Mammary epithelial cell (primary cell): ENCODE measurements at regions of chr1 and their contacts with region 1.

Region 1: GRCh38 chr1:147242439-147243227 is at the start of gene CHD1L:
- DNase-seq: peak; percentile 94
- H3K4me3 ChIP-seq: peak within 1 kb of the TSS; percentile 88 to 94 (median 93)
- H3K27ac ChIP-seq: peak within 1 kb of the TSS; percentile 76
- H3K4me1 ChIP-seq: peaks cover 14% of the 10 kb centered on the region
- H3K27me3 ChIP-seq: no peaks in the 10 kb centered on the region
- CTCF ChIP-seq: peak; percentile 79 to 95
- total RNA-seq, gene CHD1L: 33.0 to 50.9 TPM

Region 2: DNA sequence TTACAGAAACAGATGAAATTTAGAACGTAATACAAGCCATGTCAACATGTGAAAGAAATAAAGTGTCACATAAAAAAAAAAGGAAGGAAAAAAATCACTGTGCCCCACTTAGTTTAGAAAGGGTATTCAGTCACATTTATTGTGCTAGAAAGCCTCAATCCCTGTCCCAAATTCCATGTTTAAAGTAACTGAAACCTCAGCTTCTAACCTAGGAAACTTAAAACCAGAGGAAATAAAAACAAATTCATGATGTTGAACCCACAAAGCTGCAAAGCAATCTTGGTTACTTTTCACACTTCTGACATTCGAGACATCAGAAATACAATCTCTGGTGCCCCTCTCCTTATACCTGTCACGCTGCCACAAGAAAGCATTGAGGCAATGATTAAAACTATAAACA is 202.7 kb before region 1 on chr1:
- CTCF ChIA-PET with region 1: no interaction called
- dilution Hi-C with region 1: no loop called
- in situ Hi-C with region 1: no loop called
- intact Hi-C with region 1: no loop called
- DNase-seq: no peak
- H3K4me3 ChIP-seq: no peak overlapping the region
- H3K27ac ChIP-seq: no peak overlapping the region
- H3K4me1 ChIP-seq: no peaks in the 10 kb centered on the region
- H3K27me3 ChIP-seq: peaks cover 11% of the 10 kb centered on the region
- CTCF ChIP-seq: no peak

Region 3: DNA sequence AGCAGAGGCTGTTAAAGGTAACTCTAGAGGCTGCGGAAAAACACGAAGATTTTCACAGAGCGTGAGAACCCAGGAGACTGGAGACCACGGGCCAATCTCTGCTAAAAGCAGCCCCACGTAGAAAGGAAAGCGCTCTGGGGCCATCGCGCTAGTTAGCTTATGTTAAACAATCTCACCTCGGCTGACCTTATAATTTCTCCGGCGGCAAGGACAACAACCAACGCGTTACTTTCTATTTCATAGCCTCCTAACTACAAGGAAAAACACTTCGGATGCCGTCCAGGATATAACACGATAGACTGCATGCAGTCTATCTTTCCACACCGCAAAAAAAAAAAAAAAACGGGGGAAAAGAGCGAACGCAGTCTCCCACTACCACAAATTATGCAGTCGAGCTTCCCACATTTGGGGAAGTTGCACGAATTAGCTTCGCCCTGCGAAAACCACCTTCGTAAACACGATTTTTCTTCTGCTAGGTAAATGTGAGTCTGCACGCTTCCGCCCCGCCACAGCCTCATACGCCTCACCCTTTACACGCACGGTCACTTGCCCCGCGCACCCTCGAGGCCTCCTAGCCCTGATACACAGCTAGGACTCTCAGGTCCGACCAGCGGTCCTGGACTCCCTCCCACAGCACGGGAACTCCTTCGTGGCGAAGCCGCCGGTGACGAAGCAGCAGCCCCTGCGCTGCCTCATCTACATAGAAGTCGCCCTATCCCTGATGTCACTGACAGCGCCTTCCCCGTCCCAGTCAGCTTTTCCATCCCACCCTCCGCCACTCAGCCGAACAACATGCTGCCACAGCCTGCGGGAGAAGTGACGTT is 158.1 kb before region 1 on chr1:
- CTCF ChIA-PET with region 1: no interaction called
- dilution Hi-C with region 1: no loop called
- in situ Hi-C with region 1: no loop called
- intact Hi-C with region 1: loop called (anchors 1 kb)
- DNase-seq: peak; percentile 98
- H3K4me3 ChIP-seq: peak overlapping the region; percentile 54 to 67 (median 57)
- H3K27ac ChIP-seq: peak overlapping the region; percentile 97
- H3K4me1 ChIP-seq: peaks cover 13% of the 10 kb centered on the region
- H3K27me3 ChIP-seq: peaks cover 14% of the 10 kb centered on the region
- CTCF ChIP-seq: no peak